ENCODE measurements at regions of chr14 and their contacts with region 1.

Region 1: DNA sequence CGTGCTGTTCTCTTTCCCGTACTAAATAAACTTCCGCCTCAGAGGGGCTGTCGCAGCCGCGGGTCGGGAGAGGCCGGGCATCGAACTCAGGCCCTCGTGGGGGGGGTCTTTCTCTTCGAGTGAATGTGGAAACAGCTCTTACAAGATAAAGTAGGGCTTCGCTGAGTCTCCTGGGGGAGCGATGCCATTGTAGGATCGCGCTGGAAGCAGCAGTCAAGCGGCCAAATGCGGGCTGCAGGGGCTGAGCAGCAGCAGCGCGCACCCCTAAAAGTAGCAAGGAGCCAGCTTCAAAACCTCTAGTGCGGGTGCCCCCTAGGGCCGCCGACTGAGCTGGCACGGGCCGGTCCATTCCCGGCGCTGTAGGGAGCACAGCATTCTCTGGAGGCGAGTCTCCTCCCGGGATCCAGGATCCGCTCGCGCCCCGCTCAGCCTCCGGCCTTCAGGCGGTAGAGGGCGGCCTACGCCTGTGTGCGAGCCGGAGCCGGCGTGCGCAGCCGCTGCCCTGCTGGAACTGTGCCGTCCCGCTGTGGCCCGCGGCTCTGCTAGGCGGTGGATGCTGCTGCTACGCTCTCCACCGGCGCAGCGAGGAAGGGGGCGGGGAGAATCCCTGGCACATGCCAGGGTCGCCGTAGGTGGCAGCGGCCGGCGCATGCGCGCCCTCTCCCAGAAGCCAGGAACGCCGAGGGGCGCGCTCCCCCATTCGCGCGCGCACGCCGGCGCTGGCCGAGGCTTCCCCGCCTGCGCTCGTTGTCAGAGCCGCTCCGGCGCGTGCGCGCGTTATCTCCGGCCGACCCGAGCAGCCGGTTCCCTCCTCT is at the start of gene FUT8:
- DNase-seq: peak; percentile 95
- ATAC-seq: peak; percentile 89
- H3K4me3 Mint-ChIP-seq: peak within 1 kb of the TSS; percentile 100
- H3K27ac Mint-ChIP-seq: peak within 1 kb of the TSS; percentile 98
- H3K4me1 Mint-ChIP-seq: peaks cover 53% of the 10 kb centered on the region
- H3K27me3 Mint-ChIP-seq: no peaks in the 10 kb centered on the region
- total RNA-seq, gene FUT8: 99.2 to 101 TPM

Region 2: GRCh38 chr14:65164068-65164824 is 248.0 kb before region 1 on chr14:
- CTCF ChIA-PET with region 1: interaction called, 89 read pairs
- POLR2A ChIA-PET with region 1: interaction called, 6 read pairs
- DNase-seq: peak; percentile 67
- ATAC-seq: peak; percentile 71
- H3K4me3 Mint-ChIP-seq: no peak overlapping the region
- H3K27ac Mint-ChIP-seq: peak overlapping the region; percentile 27
- H3K4me1 Mint-ChIP-seq: peaks cover 29% of the 10 kb centered on the region
- H3K27me3 Mint-ChIP-seq: no peaks in the 10 kb centered on the region

Region 3: GRCh38 chr14:65222440-65222858 is 189.8 kb before region 1 on chr14:
- CTCF ChIA-PET with region 1: interaction called, 78 read pairs
- POLR2A ChIA-PET with region 1: interaction called, 8 read pairs
- DNase-seq: peak; percentile 68
- ATAC-seq: peak; percentile 76
- H3K4me3 Mint-ChIP-seq: no peak overlapping the region
- H3K27ac Mint-ChIP-seq: peak overlapping the region; percentile 68
- H3K4me1 Mint-ChIP-seq: peaks cover 57% of the 10 kb centered on the region
- H3K27me3 Mint-ChIP-seq: no peaks in the 10 kb centered on the region

Region 4: DNA sequence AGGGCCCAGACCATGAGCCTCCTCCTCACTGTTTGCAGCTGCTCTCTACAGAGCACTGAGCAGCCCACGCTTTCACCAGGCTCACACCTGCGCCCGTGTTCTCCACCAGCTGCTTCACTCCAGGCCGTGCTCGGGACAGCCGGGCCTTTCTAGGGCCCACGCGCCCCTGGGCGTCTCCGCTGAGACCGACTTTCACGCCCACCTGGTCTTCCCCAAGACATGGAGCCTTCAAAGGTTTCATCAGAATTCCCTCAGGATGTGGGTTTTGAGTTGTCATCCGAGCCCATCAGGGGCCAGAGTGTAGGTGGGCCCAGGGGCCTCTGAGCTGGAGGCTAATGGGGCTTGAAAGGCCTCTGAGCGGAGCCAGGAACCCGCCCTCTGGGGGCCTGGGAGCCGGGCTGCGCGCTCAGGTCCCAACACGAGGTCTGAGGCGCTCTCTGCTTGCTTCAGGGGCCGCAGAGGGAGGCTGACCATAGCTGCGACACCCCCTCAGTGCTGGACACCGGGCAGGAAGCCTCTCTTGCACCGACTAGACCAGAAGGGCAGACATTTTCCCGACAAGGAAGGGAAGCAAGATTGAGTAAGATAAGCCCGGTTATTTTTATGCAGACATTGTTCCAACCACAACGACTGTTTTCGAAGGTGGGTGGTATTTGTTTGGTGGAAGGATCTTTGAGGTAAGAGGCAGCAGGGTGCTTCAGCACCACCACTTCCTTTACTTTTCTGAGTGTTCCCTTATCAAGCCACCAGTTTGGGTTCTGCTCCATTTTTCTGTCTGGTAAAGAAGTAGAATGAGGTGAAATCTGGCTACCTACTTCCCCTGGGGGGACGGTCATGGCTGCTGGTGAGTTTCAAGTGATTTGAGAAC is 124.7 kb before region 1 on chr14:
- CTCF ChIA-PET with region 1: interaction called, 171 read pairs
- POLR2A ChIA-PET with region 1: interaction called, 77 read pairs
- DNase-seq: peak; percentile 79
- ATAC-seq: peak; percentile 74
- H3K4me3 Mint-ChIP-seq: peak overlapping the region; percentile 85
- H3K27ac Mint-ChIP-seq: peak overlapping the region; percentile 99
- H3K4me1 Mint-ChIP-seq: peaks cover 79% of the 10 kb centered on the region
- H3K27me3 Mint-ChIP-seq: no peaks in the 10 kb centered on the region

Region 5: DNA sequence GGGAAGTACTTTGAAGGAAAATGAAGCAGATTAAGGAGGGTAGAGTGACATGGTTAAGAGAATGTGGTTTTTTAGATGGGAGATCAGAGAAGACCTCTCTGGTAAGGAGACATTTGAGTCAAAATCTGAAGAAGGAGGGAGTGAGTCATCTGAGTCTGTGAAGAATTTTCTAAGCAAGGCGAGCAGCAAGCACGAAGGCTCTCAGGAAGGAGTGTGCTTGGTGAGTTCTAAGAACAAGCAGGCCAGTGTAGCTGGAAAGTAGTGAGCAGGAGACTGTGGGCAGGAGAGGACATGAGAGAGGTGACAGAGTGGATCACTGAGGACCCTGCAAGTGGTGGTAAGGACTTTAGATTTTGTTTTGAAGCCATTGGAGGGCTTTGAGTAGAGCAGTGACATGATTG is 76.0 kb before region 1 on chr14:
- CTCF ChIA-PET with region 1: interaction called, 7 read pairs
- POLR2A ChIA-PET with region 1: interaction called, 16 read pairs
- DNase-seq: peak; percentile 76
- ATAC-seq: peak; percentile 91
- H3K4me3 Mint-ChIP-seq: peak overlapping the region; percentile 74
- H3K27ac Mint-ChIP-seq: peak overlapping the region; percentile 93
- H3K4me1 Mint-ChIP-seq: peaks cover 73% of the 10 kb centered on the region
- H3K27me3 Mint-ChIP-seq: no peaks in the 10 kb centered on the region

Region 6: GRCh38 chr14:65631040-65631439 is 218.8 kb after region 1 on chr14:
- CTCF ChIA-PET with region 1: no interaction called
- POLR2A ChIA-PET with region 1: no interaction called
- DNase-seq: no peak
- ATAC-seq: no peak
- H3K4me3 Mint-ChIP-seq: no peak overlapping the region
- H3K27ac Mint-ChIP-seq: no peak overlapping the region
- H3K4me1 Mint-ChIP-seq: peaks cover 11% of the 10 kb centered on the region
- H3K27me3 Mint-ChIP-seq: no peaks in the 10 kb centered on the region

Region 7: DNA sequence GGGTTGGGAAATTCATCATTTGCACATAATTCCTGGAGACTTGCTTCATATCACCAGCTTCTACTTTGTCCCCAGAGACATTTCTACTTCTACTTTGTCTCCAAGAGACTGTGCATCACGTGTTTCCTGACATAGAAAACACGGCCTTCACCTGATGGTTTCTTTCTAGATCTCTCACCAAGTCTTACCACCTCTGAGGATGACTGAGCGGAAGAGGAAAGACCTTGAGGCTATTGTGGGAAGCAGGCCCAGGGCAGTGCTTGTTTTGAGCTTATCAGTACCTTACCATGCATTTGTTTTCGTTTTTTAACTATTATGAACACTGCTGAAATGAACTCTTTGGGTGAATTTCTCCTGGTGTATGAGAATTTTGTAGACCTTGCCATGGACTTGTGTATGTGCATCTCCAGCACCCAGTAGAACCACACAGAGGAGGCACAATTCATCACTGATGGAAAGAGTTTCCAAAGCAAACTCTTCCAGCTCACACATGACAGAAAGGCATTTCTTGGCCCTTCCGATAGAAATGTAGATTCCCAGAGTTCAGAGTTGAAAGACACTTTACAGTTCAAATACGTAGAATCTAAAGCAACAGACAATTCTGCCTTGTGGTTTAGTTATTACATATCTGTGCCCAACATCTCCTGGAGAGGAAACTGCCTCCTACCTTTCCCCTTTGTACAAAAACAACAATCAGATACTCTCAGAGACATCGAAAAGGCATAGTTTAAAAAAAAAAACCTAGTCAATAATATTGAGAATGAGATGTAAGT is 435.0 kb after region 1 on chr14:
- CTCF ChIA-PET with region 1: interaction called, 16 read pairs
- POLR2A ChIA-PET with region 1: interaction called, 8 read pairs
- DNase-seq: peak; percentile 93
- ATAC-seq: peak; percentile 92
- H3K4me3 Mint-ChIP-seq: peak overlapping the region; percentile 60
- H3K27ac Mint-ChIP-seq: peak overlapping the region; percentile 93
- H3K4me1 Mint-ChIP-seq: peaks cover 83% of the 10 kb centered on the region
- H3K27me3 Mint-ChIP-seq: no peaks in the 10 kb centered on the region